PC-3 (cell line): ENCODE measurements at regions of chr1 and their contacts with region 1.

Region 1: DNA sequence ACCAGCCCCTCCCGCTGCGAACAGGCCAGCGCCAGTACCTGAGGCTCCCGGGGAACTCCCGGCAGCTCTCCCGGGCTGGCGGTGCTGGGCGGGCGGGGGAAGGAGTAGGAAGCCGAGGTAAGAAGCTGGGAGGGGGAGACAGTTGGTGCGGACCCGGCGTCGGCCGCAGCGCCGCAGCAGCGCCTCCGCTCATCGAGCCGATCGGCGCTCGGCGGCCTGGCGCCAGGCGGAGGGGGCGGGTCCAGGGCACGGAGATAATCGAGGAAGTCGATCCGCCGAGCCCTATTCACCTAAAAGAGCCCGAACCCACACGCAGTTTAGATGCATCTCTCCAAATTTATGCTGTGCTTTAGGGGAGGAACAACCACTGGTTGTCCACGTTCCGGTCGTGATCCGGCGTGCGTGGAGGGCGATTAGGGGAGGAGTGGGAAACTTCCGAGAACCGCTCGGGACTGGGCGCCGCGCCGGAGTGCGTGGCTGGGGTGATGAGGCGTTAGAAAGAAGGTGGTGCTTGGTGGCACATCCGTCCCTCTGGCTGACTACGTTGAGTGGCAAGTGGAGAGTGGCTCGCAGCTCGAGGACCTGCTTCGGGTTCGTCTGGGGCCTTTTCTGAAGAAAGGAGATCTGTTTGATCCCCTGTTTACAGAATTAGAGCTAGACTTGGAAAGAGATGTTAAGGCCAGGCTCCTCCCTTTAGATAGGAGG is at the start of gene VAMP4:
- DNase-seq: peak; percentile 99
- ATAC-seq: peak; percentile 81
- H3K4me3 ChIP-seq: peak within 1 kb of the TSS; percentile 75
- H3K27ac ChIP-seq: peak within 1 kb of the TSS; percentile 74
- H3K4me1 ChIP-seq: peaks cover 40% of the 10 kb centered on the region
- H3K27me3 ChIP-seq: no peaks in the 10 kb centered on the region
- CTCF ChIP-seq: no peak
- total RNA-seq, gene VAMP4: 5.2 and 7.2 TPM in 2 replicates

Region 2: GRCh38 chr1:171769171-171769570 is 27.1 kb after region 1 on chr1:
- CTCF ChIA-PET with region 1: no interaction called
- POLR2A ChIA-PET with region 1: no interaction called
- intact Hi-C with region 1: loop called (anchors 1 kb)
- DNase-seq: no peak
- ATAC-seq: no peak
- H3K4me3 ChIP-seq: no peak overlapping the region
- H3K27ac ChIP-seq: no peak overlapping the region
- H3K4me1 ChIP-seq: no peaks in the 10 kb centered on the region
- H3K27me3 ChIP-seq: peaks cover 24% of the 10 kb centered on the region
- CTCF ChIP-seq: no peak

Region 3: DNA sequence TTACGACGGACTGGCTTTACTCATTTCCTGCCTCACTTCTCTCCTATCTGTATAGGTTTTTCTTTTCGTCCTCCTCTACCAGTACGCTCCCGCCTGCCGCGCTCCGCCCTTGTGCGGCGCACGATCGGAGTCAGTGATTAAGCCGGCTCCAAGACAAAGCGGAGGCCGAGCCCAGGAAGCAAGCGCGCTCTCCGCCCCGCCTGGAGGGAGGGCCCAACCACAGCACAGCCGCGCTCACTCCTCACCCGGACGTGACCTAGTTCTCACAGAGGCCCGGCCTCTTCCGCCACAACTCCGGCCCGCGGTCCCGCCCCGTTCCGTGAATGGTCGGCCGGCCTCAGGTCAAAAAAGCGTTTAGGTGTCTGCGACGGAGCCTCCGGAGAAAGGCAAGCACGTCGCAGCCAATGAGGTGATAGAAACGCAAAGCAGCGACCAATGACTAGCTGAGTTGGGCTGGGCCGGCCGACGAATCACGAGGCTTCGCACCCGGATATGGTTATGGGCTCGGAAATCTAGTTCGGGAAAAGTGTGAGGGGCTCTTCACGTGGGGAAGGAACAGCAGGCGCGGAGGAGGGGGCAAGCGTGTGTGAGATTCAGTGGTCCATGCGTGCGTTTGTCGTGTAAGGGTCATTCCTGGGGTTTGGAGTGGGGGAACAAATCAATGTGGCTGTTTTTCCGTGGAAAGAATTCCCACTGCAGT is 39.3 kb after region 1 on chr1 and contains the start of gene METTL13:
- CTCF ChIA-PET with region 1: interaction called, 5 read pairs
- POLR2A ChIA-PET with region 1: interaction called, 14 read pairs
- intact Hi-C with region 1: loop called (anchors 1 kb)
- DNase-seq: peak; percentile 100
- ATAC-seq: peak; percentile 97
- H3K4me3 ChIP-seq: peak within 1 kb of the TSS; percentile 75
- H3K27ac ChIP-seq: peak within 1 kb of the TSS; percentile 61
- H3K4me1 ChIP-seq: peaks cover 39% of the 10 kb centered on the region
- H3K27me3 ChIP-seq: no peaks in the 10 kb centered on the region
- CTCF ChIP-seq: no peak
- total RNA-seq, gene METTL13: 115 and 138 TPM in 2 replicates

Region 4: GRCh38 chr1:171817511-171818265 is 75.7 kb after region 1 on chr1:
- CTCF ChIA-PET with region 1: no interaction called
- POLR2A ChIA-PET with region 1: no interaction called
- intact Hi-C with region 1: loop called (anchors 1 kb)
- DNase-seq: peak; percentile 99
- ATAC-seq: peak; percentile 99
- H3K4me3 ChIP-seq: no peak overlapping the region
- H3K27ac ChIP-seq: peak overlapping the region; percentile 3
- H3K4me1 ChIP-seq: peaks cover 16% of the 10 kb centered on the region
- H3K27me3 ChIP-seq: no peaks in the 10 kb centered on the region
- CTCF ChIP-seq: no peak

Region 5: GRCh38 chr1:171984850-171985485 is 242.9 kb after region 1 on chr1:
- CTCF ChIA-PET with region 1: no interaction called
- POLR2A ChIA-PET with region 1: no interaction called
- intact Hi-C with region 1: loop called (anchors 1 kb)
- DNase-seq: peak; percentile 78
- ATAC-seq: peak; percentile 54
- H3K4me3 ChIP-seq: no peak overlapping the region
- H3K27ac ChIP-seq: no peak overlapping the region
- H3K4me1 ChIP-seq: no peaks in the 10 kb centered on the region
- H3K27me3 ChIP-seq: peaks cover 32% of the 10 kb centered on the region
- CTCF ChIP-seq: peak; percentile 99